A673 (cell line): ENCODE measurements at regions of chr12 and their contacts with region 1.

Region 1: GRCh38 chr12:52023182-52023975 is 16.6 kb downstream of the TAMALIN start:
- DNase-seq: peak; percentile 86
- H3K4me3 ChIP-seq: peak overlapping the region; percentile 60
- H3K27ac ChIP-seq: peak overlapping the region; percentile 44
- H3K4me1 ChIP-seq: peaks cover 19% of the 10 kb centered on the region
- H3K27me3 ChIP-seq: no peaks in the 10 kb centered on the region
- CTCF ChIP-seq: peak; percentile 99

Region 2: GRCh38 chr12:51895501-51896041 is 127.8 kb before region 1 on chr12:
- CTCF ChIA-PET with region 1: interaction called, 4 read pairs
- POLR2A ChIA-PET with region 1: interaction called, 4 read pairs
- intact Hi-C with region 1: loop called (anchors 2 kb)
- DNase-seq: no peak
- H3K4me3 ChIP-seq: no peak overlapping the region
- H3K27ac ChIP-seq: no peak overlapping the region
- H3K4me1 ChIP-seq: no peaks in the 10 kb centered on the region
- H3K27me3 ChIP-seq: no peaks in the 10 kb centered on the region
- CTCF ChIP-seq: no peak

Region 3: GRCh38 chr12:51994959-51995358 is 28.4 kb before region 1 on chr12:
- CTCF ChIA-PET with region 1: interaction called, 23 read pairs
- POLR2A ChIA-PET with region 1: no interaction called
- intact Hi-C with region 1: loop called (anchors 1 kb)
- DNase-seq: no peak
- H3K4me3 ChIP-seq: no peak overlapping the region
- H3K27ac ChIP-seq: no peak overlapping the region
- H3K4me1 ChIP-seq: no peaks in the 10 kb centered on the region
- H3K27me3 ChIP-seq: no peaks in the 10 kb centered on the region
- CTCF ChIP-seq: no peak

Region 4: DNA sequence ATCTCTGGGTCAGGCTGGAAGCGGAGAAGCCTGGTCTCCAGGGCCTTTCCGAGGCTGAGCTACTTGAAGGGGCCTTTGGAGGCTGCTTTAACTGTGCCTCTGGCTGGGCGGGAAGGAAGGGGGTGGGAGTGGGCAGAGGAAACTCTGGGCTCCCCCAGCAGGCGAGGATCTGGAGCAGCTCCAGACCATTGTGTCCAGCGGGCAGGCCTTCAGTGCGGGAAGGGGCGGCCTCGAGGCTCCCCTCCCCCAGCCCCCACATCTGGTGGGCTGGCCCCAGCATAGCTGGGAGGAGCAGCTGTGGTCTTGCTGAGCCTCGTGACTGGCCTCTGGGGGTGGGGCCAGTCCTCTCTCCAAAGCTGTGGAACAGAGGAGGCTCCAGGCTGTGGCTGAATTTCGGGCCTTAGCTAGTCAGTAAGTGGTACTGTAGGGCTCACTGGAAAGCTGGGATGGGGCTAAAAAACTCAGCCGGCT is 13.2 kb before region 1 on chr12:
- CTCF ChIA-PET with region 1: interaction called, 11 read pairs
- POLR2A ChIA-PET with region 1: interaction called, 7 read pairs
- intact Hi-C with region 1: loop called (anchors 1 kb)
- DNase-seq: peak; percentile 63
- H3K4me3 ChIP-seq: no peak overlapping the region
- H3K27ac ChIP-seq: peak overlapping the region; percentile 61
- H3K4me1 ChIP-seq: peaks cover 26% of the 10 kb centered on the region
- H3K27me3 ChIP-seq: no peaks in the 10 kb centered on the region
- CTCF ChIP-seq: no peak

Region 5: GRCh38 chr12:52082988-52083637 is 59.7 kb after region 1 on chr12:
- CTCF ChIA-PET with region 1: interaction called, 46 read pairs
- POLR2A ChIA-PET with region 1: no interaction called
- intact Hi-C with region 1: loop called (anchors 1 kb)
- DNase-seq: peak; percentile 72
- H3K4me3 ChIP-seq: no peak overlapping the region
- H3K27ac ChIP-seq: peak overlapping the region; percentile 23
- H3K4me1 ChIP-seq: peaks cover 24% of the 10 kb centered on the region
- H3K27me3 ChIP-seq: no peaks in the 10 kb centered on the region
- CTCF ChIP-seq: peak; percentile 99

Region 6: DNA sequence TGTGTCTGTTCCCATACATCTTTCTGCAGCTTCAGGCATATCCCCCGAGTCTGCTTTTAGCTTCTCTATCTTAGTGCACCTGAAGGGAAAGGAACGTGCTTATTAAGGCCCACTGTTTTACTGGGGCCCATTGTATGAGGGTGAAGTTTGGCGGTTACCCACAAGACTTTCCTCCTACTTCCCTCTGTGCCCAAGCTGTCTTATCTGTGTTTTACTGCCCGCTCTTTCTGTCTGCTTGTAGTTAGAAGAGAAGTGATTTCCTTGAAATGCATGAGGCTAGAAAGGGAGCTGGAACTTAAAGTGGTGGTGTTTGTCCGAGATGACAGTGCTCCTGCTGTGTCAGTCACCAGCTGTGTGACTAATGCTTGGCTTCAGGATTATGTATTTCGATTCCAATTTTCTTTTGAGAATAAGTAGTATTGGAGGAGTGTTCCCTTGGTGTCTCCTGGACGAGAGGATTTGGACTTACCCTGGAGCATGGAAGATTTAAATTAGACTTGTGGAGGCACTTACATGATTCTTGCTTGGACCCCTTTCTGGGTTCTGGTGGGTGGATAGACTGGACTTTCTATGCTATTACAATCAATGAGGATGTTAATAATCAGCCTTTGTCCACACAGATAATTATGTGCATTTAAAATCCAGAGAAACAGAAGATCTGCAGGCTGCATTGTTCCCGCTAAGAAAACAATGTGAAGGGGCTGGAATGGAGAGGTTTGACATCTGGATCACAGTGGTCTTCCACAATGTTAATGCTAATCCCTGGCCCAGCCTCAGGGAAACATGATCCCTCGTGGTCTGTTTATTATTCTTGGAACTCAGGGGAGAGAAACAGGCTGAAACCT is 237.2 kb after region 1 on chr12:
- CTCF ChIA-PET with region 1: no interaction called
- POLR2A ChIA-PET with region 1: no interaction called
- intact Hi-C with region 1: no loop called
- DNase-seq: no peak
- H3K4me3 ChIP-seq: no peak overlapping the region
- H3K27ac ChIP-seq: no peak overlapping the region
- H3K4me1 ChIP-seq: peaks cover 15% of the 10 kb centered on the region
- H3K27me3 ChIP-seq: peaks cover 20% of the 10 kb centered on the region
- CTCF ChIP-seq: no peak